ENCODE measurements at regions of chr11 and their contacts with region 1.

Region 1: GRCh38 chr11:15650105-15650938 is 535.6 kb downstream of the INSC start:
- DNase-seq: peak; percentile 93 to 96 (median 94)
- H3K4me3 ChIP-seq: peak overlapping the region in 2 of 4 donors; percentile 41 to 55
- H3K27ac ChIP-seq: peak overlapping the region in 3 of 5 donors; percentile 34 to 72 (median 38)
- H3K4me1 ChIP-seq: peaks cover 4 to 20% of the 10 kb centered on the region in 2 donors
- H3K27me3 ChIP-seq: no peaks in the 10 kb centered on the region
- CTCF ChIP-seq: peak; percentile 94 to 99 (median 98)
- POLR2A ChIP-seq: no peak

Region 2: GRCh38 chr11:15819679-15820286 is 169.5 kb after region 1 on chr11:
- intact Hi-C with region 1: loop called in 1 of 2 experiments (anchors 5 kb)
- DNase-seq: peak; percentile 66 to 85 (median 78)
- H3K4me3 ChIP-seq: no peak overlapping the region
- H3K27ac ChIP-seq: no peak overlapping the region
- H3K4me1 ChIP-seq: peaks cover 0 to 37% of the 10 kb centered on the region in 2 donors
- H3K27me3 ChIP-seq: no peaks in the 10 kb centered on the region
- CTCF ChIP-seq: peak; percentile 72 to 86 (median 78)
- POLR2A ChIP-seq: no peak

Region 3: DNA sequence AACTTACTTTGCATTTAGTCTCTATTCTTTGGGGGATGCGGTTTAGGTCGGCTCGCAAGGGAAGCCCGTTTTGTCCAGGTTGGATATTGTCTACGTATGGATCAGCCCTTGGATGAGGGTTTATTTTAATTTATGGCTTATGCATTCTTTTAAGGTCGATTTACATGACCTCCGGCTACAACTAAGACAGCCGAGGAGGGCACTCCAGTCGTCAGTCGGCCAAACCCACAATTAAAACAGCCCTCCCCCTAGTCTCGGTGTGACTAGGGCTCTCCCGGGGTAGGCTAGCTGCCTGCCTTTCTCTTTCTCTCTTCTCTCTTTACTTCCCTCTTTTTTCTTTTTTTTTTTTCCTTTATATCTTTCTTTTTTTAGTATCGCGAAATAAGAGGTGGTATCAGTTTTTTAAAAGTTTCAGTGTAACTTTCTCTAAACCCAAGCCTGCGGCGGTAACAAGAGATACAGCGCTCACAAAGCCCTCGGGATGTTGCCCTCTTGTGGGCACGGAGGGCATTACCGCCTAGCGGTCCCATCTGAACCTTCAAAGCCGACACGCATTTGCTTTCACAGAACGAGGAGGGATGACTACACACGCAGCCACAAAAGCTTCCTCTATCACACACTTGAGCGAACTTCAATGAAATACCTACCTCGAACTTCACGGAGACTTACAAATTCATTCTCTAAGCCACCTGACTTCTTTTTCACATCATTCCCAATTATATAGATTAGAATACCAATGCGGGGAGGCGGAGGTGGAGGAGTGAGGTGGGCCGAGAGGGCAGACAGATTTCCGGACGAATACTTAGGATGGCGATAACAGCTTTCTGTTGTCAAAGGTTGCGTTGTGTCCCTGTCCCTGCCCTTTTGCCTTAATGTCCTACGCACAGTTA is 955.8 kb after region 1 on chr11:
- intact Hi-C with region 1: loop called (anchors 10 kb)
- DNase-seq: peak; percentile 88 to 97 (median 93)
- H3K4me3 ChIP-seq: peak overlapping the region; percentile 9 to 60 (median 34)
- H3K27ac ChIP-seq: peak overlapping the region in 4 of 5 donors; percentile 76 to 93 (median 84)
- H3K4me1 ChIP-seq: peaks cover 5 to 14% of the 10 kb centered on the region in 2 donors
- H3K27me3 ChIP-seq: peaks cover 23% of the 10 kb centered on the region
- CTCF ChIP-seq: peak; percentile 92 to 98 (median 97)
- POLR2A ChIP-seq: peak; percentile 61 to 89

Measured in adrenal gland (tissue), 19 donors.